H1 (cell line): ENCODE measurements at regions of chr5 and their contacts with region 1.

Region 1: DNA sequence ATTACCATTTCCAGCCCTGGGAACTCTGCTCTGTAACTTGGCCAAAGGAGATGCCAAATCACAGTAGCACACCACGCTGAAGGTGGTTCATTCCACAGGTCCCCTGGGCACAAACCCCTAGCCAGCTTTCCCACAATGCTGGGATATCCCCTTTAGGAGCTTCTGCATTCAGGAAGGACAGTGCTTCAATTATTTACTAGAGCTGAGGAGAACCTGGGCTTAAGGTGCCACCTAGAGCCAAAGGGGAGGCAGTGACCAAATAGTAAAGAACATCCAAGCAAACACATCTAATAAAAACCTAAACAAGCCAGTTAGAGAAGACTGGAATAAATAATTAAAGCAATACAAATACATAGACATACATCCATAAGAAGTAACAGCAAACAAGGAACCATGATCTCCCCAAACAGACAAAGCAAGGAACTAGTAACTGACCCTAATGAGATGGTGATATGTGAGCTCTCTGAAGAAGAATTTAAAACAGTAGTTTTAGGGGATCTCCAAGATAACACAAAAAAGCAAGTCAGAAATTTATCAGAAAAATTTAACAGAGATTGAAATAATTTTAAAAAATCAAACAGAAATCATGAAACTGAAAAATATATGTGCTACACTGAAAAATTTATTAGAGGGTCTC is 14.6 kb downstream of the KIF4B start:
- DNase-seq: no peak
- H3K4me3 ChIP-seq: no peak overlapping the region
- H3K27ac ChIP-seq: no peak overlapping the region
- H3K4me1 ChIP-seq: peaks cover 0 to 2% (median 0%) of the 10 kb centered on the region in 4 experiments; a peak in 2 of 7 replicates
- H3K27me3 ChIP-seq: no peaks in the 10 kb centered on the region
- CTCF ChIP-seq: peak in 2 of 3 experiments; percentile 62 to 74; a peak in 3 of 4 replicates
- EP300 ChIP-seq: no peak
- POLR2A ChIP-seq: no peak
- RAD21 ChIP-seq: peak; percentile 84 to 88

Region 2: DNA sequence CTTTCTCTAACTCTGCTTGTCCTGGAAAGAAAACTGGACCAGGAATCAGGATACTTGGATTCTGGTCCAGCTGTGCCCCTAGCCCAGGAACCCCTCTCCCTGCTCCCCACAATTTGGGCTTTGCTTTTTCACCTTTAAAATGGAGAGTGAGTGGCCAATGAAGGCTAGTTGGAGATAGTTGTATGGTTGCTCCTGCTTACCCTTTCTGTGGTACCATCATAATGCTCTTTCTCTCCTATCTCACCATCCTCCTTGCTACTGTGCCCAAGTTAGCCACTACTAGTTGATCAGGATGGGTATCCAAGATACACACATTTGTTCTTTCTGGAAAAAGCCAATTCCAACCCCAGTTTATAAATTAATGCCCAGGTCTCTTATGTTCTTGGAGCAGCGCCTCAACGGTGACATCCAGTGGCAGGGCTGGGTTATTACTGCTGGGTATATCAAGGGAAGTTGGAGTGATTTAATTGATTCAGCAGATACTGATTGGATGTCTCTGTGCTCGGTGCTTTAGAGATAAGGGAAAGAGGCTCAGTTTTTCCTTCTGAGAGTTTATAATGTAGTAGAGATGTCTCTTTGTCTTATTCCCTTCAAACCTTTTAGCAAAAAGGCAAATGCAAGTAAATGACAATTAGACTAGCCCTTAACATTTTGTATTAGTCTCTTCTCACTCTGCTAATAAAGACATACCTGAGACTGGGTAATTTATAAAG is 216.3 kb before region 1 on chr5:
- CTCF ChIA-PET with region 1: no interaction called
- POLR2A ChIA-PET with region 1: no interaction called
- DNase-seq: peak; percentile 17 to 72
- H3K4me3 ChIP-seq: no peak overlapping the region
- H3K27ac ChIP-seq: no peak overlapping the region
- H3K4me1 ChIP-seq: no peaks in the 10 kb centered on the region
- H3K27me3 ChIP-seq: no peaks in the 10 kb centered on the region
- CTCF ChIP-seq: peak; percentile 71 to 79 (median 72)
- EP300 ChIP-seq: no peak
- POLR2A ChIP-seq: no peak
- RAD21 ChIP-seq: peak; percentile 71 to 76

Region 3: DNA sequence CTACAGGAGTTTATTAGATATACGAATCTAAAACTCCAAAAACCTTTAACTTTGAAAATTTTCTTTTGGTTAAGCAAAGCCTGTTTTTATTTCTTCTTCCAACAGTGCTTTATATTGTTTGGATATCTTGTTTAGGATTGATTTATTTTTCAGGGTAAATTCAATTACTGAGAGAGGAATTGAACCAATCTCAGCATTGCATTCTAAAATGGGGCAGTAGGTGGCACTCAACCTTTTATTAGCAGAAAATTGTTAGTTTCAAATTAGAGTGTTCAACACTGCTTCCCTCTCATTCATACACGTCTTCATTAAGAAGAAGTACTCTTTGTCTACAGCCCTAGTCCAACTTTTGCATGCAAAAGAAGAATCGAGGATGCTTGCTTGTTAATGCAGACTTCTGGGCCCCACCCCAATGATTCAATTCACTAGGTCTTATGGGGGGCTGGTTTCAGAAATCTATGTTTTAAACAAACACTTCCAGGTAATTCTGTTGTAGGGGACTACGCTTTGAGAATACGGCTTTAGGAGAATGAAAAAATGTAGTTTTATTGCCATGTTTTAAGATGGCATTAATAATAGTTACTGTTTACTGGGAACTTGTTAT is 60.6 kb before region 1 on chr5:
- CTCF ChIA-PET with region 1: interaction called, 78 read pairs
- POLR2A ChIA-PET with region 1: no interaction called
- DNase-seq: no peak
- H3K4me3 ChIP-seq: no peak overlapping the region
- H3K27ac ChIP-seq: no peak overlapping the region
- H3K4me1 ChIP-seq: no peaks in the 10 kb centered on the region
- H3K27me3 ChIP-seq: no peaks in the 10 kb centered on the region
- CTCF ChIP-seq: peak in 2 of 3 experiments; percentile 2 to 51; a peak in 1 of 4 replicates
- EP300 ChIP-seq: no peak
- POLR2A ChIP-seq: no peak
- RAD21 ChIP-seq: peak; percentile 16 to 23; a peak in 2 of 4 replicates

Region 4: GRCh38 chr5:154972476-154973080 is 55.5 kb before region 1 on chr5:
- CTCF ChIA-PET with region 1: interaction called, 78 read pairs
- POLR2A ChIA-PET with region 1: no interaction called
- DNase-seq: peak in 1 of 2 experiments; percentile 51
- H3K4me3 ChIP-seq: no peak overlapping the region
- H3K27ac ChIP-seq: no peak overlapping the region
- H3K4me1 ChIP-seq: no peaks in the 10 kb centered on the region
- H3K27me3 ChIP-seq: no peaks in the 10 kb centered on the region
- CTCF ChIP-seq: peak; percentile 52 to 84 (median 80)
- EP300 ChIP-seq: no peak
- POLR2A ChIP-seq: no peak
- RAD21 ChIP-seq: peak; percentile 87 to 88

Region 5: DNA sequence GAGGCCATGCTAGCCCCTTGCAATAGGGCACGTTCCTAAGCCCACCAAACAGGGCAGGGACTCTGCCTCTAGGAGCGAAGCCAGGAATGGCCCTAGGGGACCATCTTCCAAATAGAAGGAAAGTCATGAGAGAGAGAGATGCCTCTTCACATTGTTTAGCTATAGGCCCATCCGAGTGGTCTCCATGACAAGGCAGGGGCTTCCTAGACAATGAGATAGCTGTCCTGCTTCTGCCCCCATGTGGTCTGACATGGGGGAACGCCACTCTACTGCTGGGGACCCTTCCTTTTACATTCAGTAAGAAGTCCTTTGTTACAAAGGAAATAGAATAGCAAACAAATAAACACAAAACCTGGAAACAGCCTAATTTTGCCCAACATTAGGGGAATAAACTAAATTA is 32.4 kb before region 1 on chr5:
- CTCF ChIA-PET with region 1: interaction called, 50 read pairs
- POLR2A ChIA-PET with region 1: no interaction called
- DNase-seq: peak in 1 of 2 experiments; percentile 55
- H3K4me3 ChIP-seq: no peak overlapping the region
- H3K27ac ChIP-seq: no peak overlapping the region
- H3K4me1 ChIP-seq: no peaks in the 10 kb centered on the region; a peak in 1 of 7 replicates
- H3K27me3 ChIP-seq: no peaks in the 10 kb centered on the region
- CTCF ChIP-seq: peak; percentile 58 to 69 (median 65)
- EP300 ChIP-seq: no peak
- POLR2A ChIP-seq: no peak
- RAD21 ChIP-seq: peak; percentile 72 to 75

Region 6: DNA sequence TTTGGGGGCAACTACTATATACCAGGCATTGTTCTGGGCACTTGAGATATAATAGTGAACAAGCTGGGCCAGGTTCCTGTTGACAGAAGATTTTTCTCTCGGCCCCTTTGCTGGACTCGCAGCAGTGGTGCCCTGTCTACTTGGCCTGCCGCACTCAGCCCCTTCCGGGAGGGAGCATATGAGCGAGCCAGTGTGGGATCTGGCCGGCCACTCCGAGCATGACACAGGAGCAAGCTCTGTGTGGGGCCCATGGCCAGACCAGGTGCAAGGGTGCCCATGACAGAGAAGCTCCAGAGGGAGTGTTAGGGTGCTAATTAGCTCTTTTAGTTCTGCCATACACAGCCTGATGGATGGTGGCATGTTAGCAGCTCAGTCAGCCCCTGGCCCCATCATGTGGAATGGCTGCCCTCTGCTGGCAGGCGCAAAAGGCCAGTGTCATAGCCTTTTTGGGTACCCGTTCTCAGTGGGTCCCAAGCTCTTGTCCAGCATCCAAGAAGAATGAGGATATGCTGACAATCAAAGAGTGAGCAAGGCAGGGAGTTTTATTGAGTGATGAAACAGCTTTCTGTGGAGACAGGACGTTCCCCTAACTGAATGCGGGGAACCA is 23.9 kb before region 1 on chr5:
- CTCF ChIA-PET with region 1: interaction called, 43 read pairs
- POLR2A ChIA-PET with region 1: no interaction called
- DNase-seq: peak in 1 of 2 experiments; percentile 80
- H3K4me3 ChIP-seq: no peak overlapping the region
- H3K27ac ChIP-seq: no peak overlapping the region
- H3K4me1 ChIP-seq: peaks cover 0 to 1% (median under 1%) of the 10 kb centered on the region in 4 experiments; a peak in 3 of 7 replicates
- H3K27me3 ChIP-seq: no peaks in the 10 kb centered on the region
- CTCF ChIP-seq: peak; percentile 84 to 93 (median 91)
- EP300 ChIP-seq: no peak
- POLR2A ChIP-seq: no peak
- RAD21 ChIP-seq: peak; percentile 86 to 88

Region 7: DNA sequence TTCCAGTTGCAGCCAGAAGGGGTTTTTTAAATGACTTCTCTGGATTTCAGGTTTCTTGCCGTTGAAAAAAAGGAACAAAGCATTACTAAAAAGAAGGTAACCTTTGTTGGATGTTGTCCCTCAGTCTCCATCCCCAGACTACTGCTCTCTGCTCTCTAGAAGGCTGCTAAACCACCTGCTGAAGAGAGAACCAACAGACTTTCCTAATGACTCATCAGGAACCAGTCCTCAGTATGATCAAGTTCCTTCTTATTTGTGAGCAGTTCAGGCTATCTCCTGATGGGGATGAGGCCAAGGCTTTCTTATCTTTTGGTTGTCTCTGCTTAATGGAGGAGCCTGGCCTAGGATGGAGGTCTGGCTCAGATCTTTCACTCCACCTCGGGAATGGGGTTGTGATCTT is 10.5 kb before region 1 on chr5:
- CTCF ChIA-PET with region 1: interaction called, 23 read pairs
- POLR2A ChIA-PET with region 1: no interaction called
- DNase-seq: no peak
- H3K4me3 ChIP-seq: no peak overlapping the region
- H3K27ac ChIP-seq: no peak overlapping the region
- H3K4me1 ChIP-seq: no peaks in the 10 kb centered on the region; a peak in 1 of 7 replicates
- H3K27me3 ChIP-seq: no peaks in the 10 kb centered on the region
- CTCF ChIP-seq: no peak
- EP300 ChIP-seq: no peak
- POLR2A ChIP-seq: no peak
- RAD21 ChIP-seq: no peak

Region 8: GRCh38 chr5:155136216-155136850 is 108.2 kb after region 1 on chr5:
- CTCF ChIA-PET with region 1: no interaction called
- POLR2A ChIA-PET with region 1: no interaction called
- DNase-seq: no peak
- H3K4me3 ChIP-seq: no peak overlapping the region
- H3K27ac ChIP-seq: no peak overlapping the region
- H3K4me1 ChIP-seq: peaks cover 0 to 5% (median 0%) of the 10 kb centered on the region in 4 experiments; a peak in 2 of 7 replicates
- H3K27me3 ChIP-seq: no peaks in the 10 kb centered on the region
- CTCF ChIP-seq: no peak
- EP300 ChIP-seq: no peak
- POLR2A ChIP-seq: no peak
- RAD21 ChIP-seq: no peak

Region 9: GRCh38 chr5:155167736-155168135 is 139.6 kb after region 1 on chr5:
- CTCF ChIA-PET with region 1: no interaction called
- POLR2A ChIA-PET with region 1: no interaction called
- DNase-seq: no peak
- H3K4me3 ChIP-seq: no peak overlapping the region
- H3K27ac ChIP-seq: no peak overlapping the region
- H3K4me1 ChIP-seq: no peaks in the 10 kb centered on the region
- H3K27me3 ChIP-seq: no peaks in the 10 kb centered on the region
- CTCF ChIP-seq: no peak
- EP300 ChIP-seq: no peak
- POLR2A ChIP-seq: no peak
- RAD21 ChIP-seq: no peak